ENCODE measurements at regions of chr17 and their contacts with region 1.

Region 1: DNA sequence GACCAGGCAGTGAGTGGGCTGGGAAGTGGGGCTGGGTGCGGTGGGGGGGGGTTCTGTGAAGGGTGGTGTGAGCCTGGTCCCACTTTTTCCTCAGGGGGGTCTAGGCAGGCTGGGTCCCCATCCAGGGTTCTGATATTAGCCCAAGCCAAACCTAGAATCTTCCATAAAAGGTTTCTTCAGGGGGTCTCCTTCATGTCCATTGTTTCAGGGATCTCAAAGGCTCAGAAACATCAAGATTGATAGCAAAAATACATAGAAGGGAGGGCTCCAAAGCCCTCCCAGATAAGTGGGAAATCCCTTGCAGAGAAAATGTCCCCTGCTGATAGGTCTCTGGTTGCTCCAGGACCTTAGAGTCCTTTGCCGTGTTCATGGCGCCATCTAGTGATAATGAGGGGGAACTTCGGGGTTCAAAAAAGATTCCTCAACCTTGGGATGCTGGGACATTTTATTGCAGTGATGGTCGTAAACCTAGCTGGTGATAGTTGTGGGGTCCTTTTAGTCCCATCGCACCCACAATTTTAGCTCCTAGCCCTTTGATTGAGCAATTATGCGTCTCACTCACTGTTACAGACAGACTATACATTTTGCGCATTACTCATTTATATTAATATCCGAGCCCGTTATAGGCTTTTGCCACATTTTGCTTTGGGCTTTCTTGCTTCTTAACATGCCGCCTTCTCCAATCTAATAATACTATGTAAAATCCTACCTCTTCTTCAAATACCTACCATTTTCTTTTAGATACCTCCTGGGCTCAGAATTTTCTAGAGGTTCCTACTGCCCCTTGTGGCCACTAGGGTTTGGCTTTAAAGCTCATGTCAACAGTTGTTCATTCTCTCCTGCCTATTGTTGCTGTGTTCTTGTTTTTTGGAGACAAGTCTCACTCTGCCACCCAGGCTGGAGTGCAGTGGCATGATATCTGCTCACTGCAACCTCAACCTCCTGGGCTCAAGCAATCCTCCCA is 35.1 kb downstream of the IGF2BP1 start:
- DNase-seq: peak; percentile 82
- H3K4me3 Mint-ChIP-seq: no peak overlapping the region
- H3K27ac Mint-ChIP-seq: no peak overlapping the region
- H3K4me1 Mint-ChIP-seq: peaks cover 12% of the 10 kb centered on the region
- H3K27me3 Mint-ChIP-seq: peaks cover 11% of the 10 kb centered on the region
- CTCF ChIP-seq: peak; percentile 52

Region 2: GRCh38 chr17:48646183-48647102 is 385.8 kb before region 1 on chr17:
- CTCF ChIA-PET with region 1: no interaction called
- POLR2A ChIA-PET with region 1: no interaction called
- intact Hi-C with region 1: no loop called
- DNase-seq: no peak
- H3K4me3 Mint-ChIP-seq: no peak overlapping the region
- H3K27ac Mint-ChIP-seq: no peak overlapping the region
- H3K4me1 Mint-ChIP-seq: peaks cover 6% of the 10 kb centered on the region
- H3K27me3 Mint-ChIP-seq: peaks cover 87% of the 10 kb centered on the region
- CTCF ChIP-seq: no peak

Region 3: DNA sequence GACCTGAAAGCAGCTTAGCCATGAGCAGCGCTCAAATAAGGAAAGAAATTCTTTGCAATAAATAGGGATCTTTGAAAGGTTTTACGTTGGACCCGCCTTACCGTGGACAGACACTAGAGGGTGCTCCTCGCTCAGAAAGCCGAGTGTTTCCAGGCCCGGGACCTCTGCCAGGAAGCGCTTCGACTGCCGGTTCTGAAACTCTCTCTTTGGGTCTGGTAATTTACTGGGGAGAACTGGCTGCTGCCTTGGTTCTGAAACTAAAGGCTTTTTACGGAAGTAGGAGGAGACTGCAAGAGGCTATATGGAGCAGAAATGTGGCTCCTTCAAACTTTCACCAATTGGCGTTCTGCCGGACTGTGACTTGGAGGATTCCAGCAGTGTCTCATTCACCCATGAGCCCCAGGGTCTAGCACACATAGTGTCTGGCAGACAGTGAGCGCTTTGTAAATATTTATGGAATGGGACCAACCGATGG is 360.5 kb before region 1 on chr17:
- CTCF ChIA-PET with region 1: interaction called, 5 read pairs
- POLR2A ChIA-PET with region 1: no interaction called
- intact Hi-C with region 1: loop called (anchors 5 kb)
- DNase-seq: peak; percentile 75
- H3K4me3 Mint-ChIP-seq: peak overlapping the region; percentile 75
- H3K27ac Mint-ChIP-seq: no peak overlapping the region
- H3K4me1 Mint-ChIP-seq: no peaks in the 10 kb centered on the region
- H3K27me3 Mint-ChIP-seq: peaks cover 22% of the 10 kb centered on the region
- CTCF ChIP-seq: peak; percentile 87

Region 4: DNA sequence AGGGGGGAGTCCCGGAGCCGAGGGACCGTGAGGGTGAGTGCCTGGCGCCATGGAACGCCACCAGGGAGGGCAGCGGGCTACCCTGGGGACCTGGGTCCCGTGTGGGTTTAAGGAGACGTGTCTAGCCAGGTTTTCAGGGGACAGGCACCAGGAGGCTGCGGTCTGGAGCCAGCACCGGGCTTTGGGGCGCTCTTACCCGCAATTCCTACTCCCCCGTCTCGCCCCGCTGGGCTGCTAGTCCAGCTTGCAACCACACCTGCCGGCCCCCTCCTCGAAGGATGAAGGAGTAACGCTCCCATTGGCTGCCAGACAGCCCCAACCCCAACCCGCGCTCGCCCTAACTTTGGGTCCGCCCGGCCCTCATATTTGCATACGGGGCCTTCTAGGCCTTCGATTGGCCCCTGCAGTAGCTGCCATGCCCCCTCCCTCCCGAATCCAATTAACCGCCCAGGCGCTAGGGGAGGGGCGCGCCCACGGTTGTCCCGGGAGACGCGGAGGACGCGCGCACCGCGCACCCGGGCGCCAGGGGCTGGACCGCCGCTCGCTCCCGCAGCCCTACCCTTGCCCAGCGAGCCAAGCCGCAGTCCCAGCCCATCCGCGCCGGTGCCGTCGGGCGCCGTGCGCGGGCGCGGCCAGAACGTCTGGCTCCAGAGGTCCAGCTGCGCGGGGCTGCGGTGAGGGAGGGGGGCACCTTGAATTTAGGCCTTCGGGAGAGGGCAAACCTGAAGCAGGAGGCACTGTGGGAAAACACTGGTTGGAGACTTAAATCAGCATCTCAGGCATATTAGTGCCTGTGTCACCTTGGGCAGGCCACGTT is 215.3 kb before region 1 on chr17 and contains the start of gene TTLL6:
- CTCF ChIA-PET with region 1: interaction called, 4 read pairs
- POLR2A ChIA-PET with region 1: interaction called, 3 read pairs
- intact Hi-C with region 1: loop called (anchors 1 kb)
- DNase-seq: peak; percentile 92
- H3K4me3 Mint-ChIP-seq: peak within 1 kb of the TSS; percentile 39
- H3K27ac Mint-ChIP-seq: no peak within 1 kb of the TSS
- H3K4me1 Mint-ChIP-seq: peaks cover 10% of the 10 kb centered on the region
- H3K27me3 Mint-ChIP-seq: peaks cover 11% of the 10 kb centered on the region
- CTCF ChIP-seq: no peak
- total RNA-seq, gene TTLL6: not detected in 2 replicates

Region 5: DNA sequence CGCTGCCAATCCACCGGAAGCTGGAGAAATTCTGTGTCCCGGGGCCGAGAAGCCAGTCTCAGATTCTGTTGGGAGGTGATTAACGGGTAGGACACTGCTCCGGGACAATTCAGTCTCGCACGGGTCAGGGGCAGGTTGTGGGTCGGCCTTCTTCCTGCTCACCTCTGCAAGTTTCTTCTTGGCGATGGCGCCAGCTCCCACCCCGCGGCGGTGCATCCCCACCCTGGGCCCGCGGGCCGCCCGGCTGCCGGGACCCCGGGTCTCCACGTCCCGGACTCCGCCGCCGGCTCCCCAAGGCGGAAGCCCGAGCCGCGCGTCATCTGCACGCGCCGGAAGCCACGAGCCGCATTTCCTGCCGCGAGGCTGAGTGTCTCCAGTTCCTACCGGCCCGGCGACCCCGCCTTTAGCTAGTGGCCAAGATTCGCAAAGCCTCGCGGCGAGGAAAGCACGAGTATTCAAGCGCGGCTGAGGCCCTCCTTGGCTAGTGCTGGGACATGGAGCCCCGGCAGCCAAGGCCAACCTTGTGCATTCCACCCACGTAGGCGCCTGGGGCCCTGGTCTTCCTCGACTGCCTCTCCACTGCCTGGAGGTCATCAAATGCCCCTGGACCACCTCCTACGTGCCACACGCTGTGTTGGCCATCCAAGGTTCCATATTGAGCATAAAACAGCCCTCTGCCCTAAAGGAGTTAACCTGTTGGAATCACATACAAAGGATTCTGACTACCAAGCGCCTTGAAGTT is 87.6 kb before region 1 on chr17 and contains the start of gene SNF8:
- CTCF ChIA-PET with region 1: interaction called, 9 read pairs
- POLR2A ChIA-PET with region 1: interaction called, 17 read pairs
- intact Hi-C with region 1: loop called (anchors 1 kb)
- DNase-seq: peak; percentile 86
- H3K4me3 Mint-ChIP-seq: peak within 1 kb of the TSS; percentile 89
- H3K27ac Mint-ChIP-seq: peak within 1 kb of the TSS; percentile 83
- H3K4me1 Mint-ChIP-seq: no peaks in the 10 kb centered on the region
- H3K27me3 Mint-ChIP-seq: no peaks in the 10 kb centered on the region
- CTCF ChIP-seq: no peak
- total RNA-seq, gene SNF8: 156 and 184 TPM in 2 replicates

Region 6: DNA sequence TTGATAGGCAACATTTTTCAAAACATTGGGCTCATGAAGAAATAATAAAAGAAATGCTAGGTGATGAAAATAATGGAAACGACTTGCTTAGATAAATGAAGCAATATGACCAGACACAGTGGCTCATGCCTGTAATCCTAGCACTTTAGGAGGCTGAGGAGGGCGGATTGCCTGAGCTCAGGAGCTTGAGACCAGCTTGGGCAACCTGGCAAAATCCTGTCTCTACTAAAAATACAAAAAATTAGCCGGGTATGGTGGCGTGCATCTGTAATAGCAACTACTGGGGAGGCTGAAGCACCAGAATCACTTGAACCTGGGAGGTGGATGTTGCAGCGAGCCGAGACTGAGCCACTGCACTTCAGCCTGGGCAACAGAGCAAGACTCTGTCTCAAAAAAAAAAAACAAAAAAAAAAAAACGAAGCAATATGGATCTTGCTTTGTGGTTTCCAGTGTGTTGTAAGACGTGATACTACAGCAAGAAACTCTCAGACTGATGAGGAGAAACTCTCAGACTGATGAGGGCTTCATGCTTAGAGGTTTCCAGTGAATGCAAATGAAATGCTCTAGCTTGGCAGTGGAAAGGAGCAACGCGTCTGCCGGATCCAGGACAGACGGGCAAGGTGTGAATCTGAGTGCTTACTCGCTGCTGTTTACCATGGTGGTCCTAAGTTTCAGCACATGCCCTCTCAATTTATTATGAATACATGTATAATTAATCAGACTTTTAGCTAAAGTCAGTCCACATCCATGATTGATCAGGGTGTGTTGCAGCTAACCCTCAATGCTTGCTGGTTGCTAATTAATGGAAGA is 46.6 kb before region 1 on chr17:
- CTCF ChIA-PET with region 1: no interaction called
- POLR2A ChIA-PET with region 1: no interaction called
- intact Hi-C with region 1: no loop called
- DNase-seq: no peak
- H3K4me3 Mint-ChIP-seq: no peak overlapping the region
- H3K27ac Mint-ChIP-seq: no peak overlapping the region
- H3K4me1 Mint-ChIP-seq: no peaks in the 10 kb centered on the region
- H3K27me3 Mint-ChIP-seq: peaks cover 30% of the 10 kb centered on the region
- CTCF ChIP-seq: no peak

Region 7: GRCh38 chr17:49227436-49228261 is 195.4 kb after region 1 on chr17:
- CTCF ChIA-PET with region 1: interaction called, 13 read pairs
- POLR2A ChIA-PET with region 1: interaction called, 3 read pairs
- intact Hi-C with region 1: no loop called
- DNase-seq: peak; percentile 74
- H3K4me3 Mint-ChIP-seq: no peak overlapping the region
- H3K27ac Mint-ChIP-seq: no peak overlapping the region
- H3K4me1 Mint-ChIP-seq: no peaks in the 10 kb centered on the region
- H3K27me3 Mint-ChIP-seq: peaks cover 26% of the 10 kb centered on the region
- CTCF ChIP-seq: peak; percentile 89